Activated T-helper 2 cell treated with anti-CD3 and anti-CD28 coated beads, Interferon-gamma antibody, Interleukin-2, Interleukin-4, amounts not matched to agents 10 μg/mL and 5 μg/mL and 100 μg/mL, durations not matched to agents 14 hours and 24 hours and 36 hours (primary cell): ENCODE measurements at regions of chr10 and their contacts with region 1.

Region 1: GRCh38 chr10:49177391-49178355 is 10.5 kb downstream of the TMEM273 start:
- DNase-seq: peak; percentile 71
- H3K4me3 Mint-ChIP-seq: peak overlapping the region; percentile 67
- H3K27ac Mint-ChIP-seq: peak overlapping the region; percentile 97
- H3K4me1 Mint-ChIP-seq: peaks cover 79% of the 10 kb centered on the region
- H3K27me3 Mint-ChIP-seq: no peaks in the 10 kb centered on the region

Region 2: DNA sequence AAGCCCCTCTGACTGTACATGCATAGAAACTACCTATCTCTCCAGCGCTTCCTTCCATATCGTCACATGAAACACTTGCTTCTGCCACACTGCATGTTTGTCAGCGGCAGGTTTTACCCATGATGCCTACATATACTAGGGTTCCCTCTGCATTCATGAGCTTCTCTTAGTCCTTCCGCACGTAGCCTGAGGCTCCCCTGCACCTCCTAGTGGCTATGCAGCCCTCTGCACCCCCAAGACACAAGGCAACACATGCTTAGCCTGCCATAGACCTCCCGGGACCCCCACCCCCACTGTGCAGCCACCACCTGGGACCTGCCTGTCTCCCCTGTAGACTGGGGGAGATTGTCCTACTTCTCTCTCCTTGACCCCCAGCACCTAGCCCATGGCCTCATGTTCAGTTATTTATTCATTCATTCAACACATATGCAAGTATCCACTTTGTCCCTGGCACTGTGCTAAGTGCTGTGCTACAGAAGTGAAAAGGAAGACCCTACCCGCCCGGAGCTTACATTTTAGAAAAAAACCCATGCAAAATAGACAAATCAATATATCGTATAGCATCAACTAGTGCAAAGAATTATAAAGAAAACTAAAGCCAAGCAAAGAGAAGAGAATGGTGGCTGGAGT is 13.0 kb before region 1 on chr10:
- intact Hi-C with region 1: loop called (anchors 1 kb)
- DNase-seq: peak; percentile 50
- H3K4me3 Mint-ChIP-seq: no peak overlapping the region
- H3K27ac Mint-ChIP-seq: peak overlapping the region; percentile 7
- H3K4me1 Mint-ChIP-seq: peaks cover 41% of the 10 kb centered on the region
- H3K27me3 Mint-ChIP-seq: no peaks in the 10 kb centered on the region

Region 3: DNA sequence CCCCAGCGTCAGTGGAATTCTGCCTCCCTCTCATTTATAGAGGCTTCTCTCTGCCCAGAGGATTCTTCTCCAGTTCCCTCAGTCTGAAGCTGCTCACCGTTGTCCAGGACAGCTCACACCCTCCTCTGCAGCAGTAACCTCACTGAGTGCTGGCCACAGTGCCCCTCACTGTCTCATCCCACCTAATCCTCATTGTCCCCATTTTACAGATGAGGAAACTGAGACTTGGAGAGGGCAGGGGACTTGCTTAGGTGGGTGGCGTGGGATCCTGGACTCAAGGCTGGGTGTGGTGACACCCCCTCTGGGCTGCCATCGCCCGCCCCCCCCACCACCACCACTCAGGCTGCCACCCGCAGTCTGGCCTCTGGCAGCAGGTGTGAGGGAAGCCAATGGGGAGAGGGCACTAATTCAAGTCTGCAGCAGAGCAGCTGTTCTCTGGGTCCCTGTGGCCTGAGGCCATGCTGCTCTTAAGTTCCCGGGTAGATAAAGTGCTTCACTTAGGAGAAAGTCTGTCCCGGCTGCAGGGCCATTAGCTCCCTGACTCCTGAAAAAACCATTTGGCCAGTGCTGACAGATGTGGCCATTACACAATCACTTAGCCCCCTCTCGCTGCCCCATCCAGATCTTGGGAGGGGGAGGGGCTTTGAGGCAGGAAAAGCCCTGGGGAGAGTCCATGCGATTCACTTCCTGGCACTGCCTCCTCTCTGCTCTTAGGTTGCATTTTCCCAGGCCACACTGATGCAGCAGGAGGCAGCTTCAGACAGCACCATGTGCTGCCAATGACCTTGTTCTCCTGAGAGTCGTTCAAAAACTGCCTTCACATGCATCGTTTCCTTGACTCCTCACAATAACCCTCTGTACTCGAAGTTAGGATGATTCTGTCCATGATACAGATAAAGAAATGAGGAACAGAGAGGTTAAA is 181.9 kb after region 1 on chr10:
- intact Hi-C with region 1: loop called (anchors 2 kb)
- DNase-seq: no peak
- H3K4me3 Mint-ChIP-seq: no peak overlapping the region
- H3K27ac Mint-ChIP-seq: no peak overlapping the region
- H3K4me1 Mint-ChIP-seq: peaks cover 5% of the 10 kb centered on the region
- H3K27me3 Mint-ChIP-seq: peaks cover 4% of the 10 kb centered on the region